ENCODE measurements at regions of chr4 and their contacts with region 1.

Region 1: GRCh38 chr4:73698217-73698616 is 42.2 kb upstream of the CXCL8 start:
- DNase-seq: no peak
- ATAC-seq: no peak
- H3K4me3 ChIP-seq: no peak overlapping the region
- H3K27ac ChIP-seq: no peak overlapping the region
- H3K4me1 ChIP-seq: no peaks in the 10 kb centered on the region
- H3K27me3 ChIP-seq: no peaks in the 10 kb centered on the region; a peak in 1 of 4 replicates
- CTCF ChIP-seq: no peak
- EP300 ChIP-seq: no peak
- POLR2A ChIP-seq: no peak
- RAD21 ChIP-seq: no peak

Region 2: DNA sequence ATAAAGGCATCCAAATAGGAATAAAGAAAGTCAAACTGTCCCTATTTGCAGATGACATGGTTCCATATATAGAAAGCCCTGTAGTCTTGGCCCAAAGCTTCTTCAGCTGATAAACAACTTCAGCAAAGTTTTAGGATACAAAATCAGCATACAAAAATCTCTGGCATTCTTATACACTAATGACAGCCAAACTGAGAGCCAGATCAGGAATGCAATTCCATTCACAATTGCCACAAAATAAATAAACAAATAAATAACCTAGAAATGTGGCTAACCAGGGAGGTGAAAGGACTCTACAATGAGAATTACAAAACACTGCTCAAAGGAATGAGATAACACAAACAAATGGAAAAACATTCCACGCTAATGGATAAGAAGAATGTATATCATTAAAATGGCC is 10.8 kb before region 1 on chr4:
- CTCF ChIA-PET with region 1: interaction called, 4 read pairs
- POLR2A ChIA-PET with region 1: interaction called, 3 read pairs
- RAD21 ChIA-PET with region 1: no interaction called
- SMC1A ChIA-PET with region 1: interaction called, 13 read pairs
- in situ Hi-C with region 1: no loop called
- intact Hi-C with region 1: no loop called
- DNase-seq: no peak
- ATAC-seq: no peak
- H3K4me3 ChIP-seq: no peak overlapping the region
- H3K27ac ChIP-seq: no peak overlapping the region
- H3K4me1 ChIP-seq: no peaks in the 10 kb centered on the region
- H3K27me3 ChIP-seq: no peaks in the 10 kb centered on the region; a peak in 2 of 4 replicates
- CTCF ChIP-seq: no peak
- EP300 ChIP-seq: no peak
- POLR2A ChIP-seq: no peak
- RAD21 ChIP-seq: no peak